HAP-1 (cell line): ENCODE measurements at regions of chr18 and their contacts with region 1.

Region 1: GRCh38 chr18:32160547-32160946 is 29.3 kb upstream of the MEP1B start:
- DNase-seq: no peak
- H3K4me3 ChIP-seq: no peak overlapping the region
- H3K4me1 ChIP-seq: no peaks in the 10 kb centered on the region
- H3K27me3 ChIP-seq: no peaks in the 10 kb centered on the region; the same call in 1 of the 2 replicates

Region 2: DNA sequence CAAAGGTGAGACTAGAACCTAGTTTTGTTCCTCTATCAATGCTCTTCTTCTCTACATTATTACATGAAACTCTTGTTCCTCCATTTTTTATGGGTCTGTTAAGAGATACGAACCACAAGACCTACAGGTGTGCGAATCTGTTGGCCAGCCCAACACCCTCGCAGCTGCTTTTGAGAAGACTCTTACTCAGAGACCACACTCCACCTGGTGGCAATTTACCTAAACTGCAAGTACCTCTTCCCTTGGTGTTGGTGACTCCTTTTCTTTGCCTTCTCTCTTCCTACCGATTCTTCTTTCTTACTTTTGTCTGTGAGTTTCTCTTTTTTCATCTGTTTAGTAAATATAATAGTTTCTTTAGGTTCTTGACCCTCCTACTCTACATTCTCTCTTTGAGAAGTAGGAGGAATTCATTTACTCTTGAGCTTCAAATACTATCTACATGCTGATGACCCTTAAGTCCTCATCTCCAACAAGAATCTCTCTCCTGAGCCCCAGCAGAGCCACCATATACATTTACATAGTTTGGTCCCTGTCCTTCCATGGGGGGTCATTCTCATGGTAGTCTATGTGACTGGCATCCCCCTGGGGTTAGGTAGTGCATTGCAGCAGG is 392.0 kb after region 1 on chr18:
- in situ Hi-C with region 1: loop called (anchors 5 kb)
- DNase-seq: peak; percentile 45 to 78
- H3K4me3 ChIP-seq: no peak overlapping the region
- H3K4me1 ChIP-seq: no peaks in the 10 kb centered on the region; the same call in 1 of the 2 replicates
- H3K27me3 ChIP-seq: no peaks in the 10 kb centered on the region